Posterior vena cava (tissue), 2 donors: ENCODE measurements at regions of chr11 and their contacts with region 1.

Region 1: GRCh38 chr11:93741094-93741881 is at the starts of genes C11orf54 and TAF1D:
- DNase-seq: peak; percentile 99
- total RNA-seq, gene C11orf54: 16.8 to 19.9 TPM
- total RNA-seq, gene TAF1D: 72.5 to 98.5 TPM

Region 2: DNA sequence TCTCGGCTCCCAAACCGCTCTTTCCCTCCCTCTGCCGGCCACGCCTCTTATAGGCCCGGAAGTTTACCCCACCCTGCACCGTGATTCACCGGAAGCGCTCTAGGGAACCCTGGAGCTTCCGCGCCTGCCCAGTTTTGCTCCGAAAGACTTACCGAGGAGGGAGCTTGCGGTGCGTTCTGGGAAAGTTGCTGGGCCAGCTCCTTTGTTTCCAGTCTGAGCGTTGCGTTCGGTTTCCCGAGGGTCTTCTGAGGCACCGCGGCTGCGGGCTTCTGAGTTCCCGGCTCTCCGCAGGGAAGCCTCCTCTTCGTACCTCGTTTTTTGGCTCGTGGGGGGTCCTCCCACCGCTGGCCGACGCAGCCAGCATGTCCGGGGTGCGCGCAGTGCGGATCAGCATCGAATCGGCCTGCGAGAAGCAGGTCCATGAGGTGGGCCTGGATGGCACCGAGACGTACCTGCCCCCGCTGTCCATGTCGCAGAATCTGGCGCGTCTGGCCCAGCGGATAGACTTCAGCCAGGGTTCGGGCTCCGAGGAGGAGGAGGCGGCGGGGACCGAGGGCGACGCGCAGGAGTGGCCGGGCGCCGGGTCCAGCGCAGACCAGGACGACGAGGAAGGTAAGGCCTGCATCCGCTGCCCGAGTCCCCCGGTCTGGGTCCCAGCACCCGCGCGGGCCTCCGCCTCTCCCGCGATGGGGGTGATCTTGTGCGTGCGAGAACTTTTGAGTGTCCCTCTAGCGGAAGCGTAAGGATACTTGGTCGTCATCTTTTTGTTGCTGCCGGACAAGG is 43.1 kb after region 1 on chr11 and contains the start of gene MED17:
- intact Hi-C with region 1: loop called in 1 of 2 experiments (anchors 5 kb)
- DNase-seq: peak; percentile 98
- total RNA-seq, gene MED17: 20.6 to 21.2 TPM